Heart right ventricle (tissue), 16 donors: ENCODE measurements at regions of chr3 and their contacts with region 1.

Region 1: GRCh38 chr3:36408146-36408545 is 27.8 kb downstream of the STAC start:
- DNase-seq: no peak
- ATAC-seq: no peak
- H3K4me3 ChIP-seq: no peak overlapping the region
- H3K27ac ChIP-seq: no peak overlapping the region
- H3K4me1 ChIP-seq: no peaks in the 10 kb centered on the region
- H3K27me3 ChIP-seq: no peaks in the 10 kb centered on the region
- CTCF ChIP-seq: peak in 1 of 9 donors; percentile 24

Region 2: GRCh38 chr3:36525115-36525801 is 117.1 kb after region 1 on chr3:
- intact Hi-C with region 1: loop called in 1 of 10 experiments (anchors 2 kb)
- DNase-seq: no peak
- ATAC-seq: no peak
- H3K4me3 ChIP-seq: no peak overlapping the region
- H3K27ac ChIP-seq: no peak overlapping the region
- H3K4me1 ChIP-seq: no peaks in the 10 kb centered on the region
- H3K27me3 ChIP-seq: no peaks in the 10 kb centered on the region
- CTCF ChIP-seq: no peak

Region 3: GRCh38 chr3:36540888-36541518 is 132.9 kb after region 1 on chr3:
- intact Hi-C with region 1: no loop called
- DNase-seq: no peak
- ATAC-seq: no peak
- H3K4me3 ChIP-seq: no peak overlapping the region
- H3K27ac ChIP-seq: no peak overlapping the region
- H3K4me1 ChIP-seq: peaks cover 0 to 4% (median 0%) of the 10 kb centered on the region in 9 donors
- H3K27me3 ChIP-seq: no peaks in the 10 kb centered on the region
- CTCF ChIP-seq: peak in 7 of 9 donors; percentile 23 to 67 (median 39)